ENCODE measurements at regions of chrX and their contacts with region 1.

Region 1: GRCh38 chrX:104136241-104137019 is 20.4 kb downstream of the SLC25A53 start:
- DNase-seq: peak; percentile 64 to 72
- H3K4me3 ChIP-seq: peak overlapping the region; percentile 30; the same call in 1 of the 2 replicates
- H3K4me3 Mint-ChIP-seq: peak overlapping the region; percentile 68
- H3K27ac Mint-ChIP-seq: no peak overlapping the region
- H3K4me1 ChIP-seq: no peaks in the 10 kb centered on the region
- H3K4me1 Mint-ChIP-seq: no peaks in the 10 kb centered on the region
- H3K27me3 ChIP-seq: no peaks in the 10 kb centered on the region
- H3K27me3 Mint-ChIP-seq: no peaks in the 10 kb centered on the region
- CTCF ChIP-seq: peak; percentile 44 to 56

Region 2: GRCh38 chrX:104113222-104113965 is 23.0 kb before region 1 on chrX:
- CTCF ChIA-PET with region 1: no interaction called
- POLR2A ChIA-PET with region 1: no interaction called
- intact Hi-C with region 1: loop called (anchors 1 kb)
- DNase-seq: peak; percentile 58 to 67
- H3K4me3 ChIP-seq: peak overlapping the region; percentile 64
- H3K4me3 Mint-ChIP-seq: peak overlapping the region; percentile 89
- H3K27ac Mint-ChIP-seq: no peak overlapping the region
- H3K4me1 ChIP-seq: no peaks in the 10 kb centered on the region
- H3K4me1 Mint-ChIP-seq: no peaks in the 10 kb centered on the region
- H3K27me3 ChIP-seq: no peaks in the 10 kb centered on the region
- H3K27me3 Mint-ChIP-seq: no peaks in the 10 kb centered on the region
- CTCF ChIP-seq: peak; percentile 26 to 65

Region 3: GRCh38 chrX:105375816-105376215 is 1239.4 kb after region 1 on chrX:
- CTCF ChIA-PET with region 1: no interaction called
- POLR2A ChIA-PET with region 1: no interaction called
- intact Hi-C with region 1: no loop called
- DNase-seq: no peak
- H3K4me3 ChIP-seq: no peak overlapping the region
- H3K4me3 Mint-ChIP-seq: no peak overlapping the region
- H3K27ac Mint-ChIP-seq: no peak overlapping the region
- H3K4me1 ChIP-seq: no peaks in the 10 kb centered on the region
- H3K4me1 Mint-ChIP-seq: no peaks in the 10 kb centered on the region
- H3K27me3 ChIP-seq: no peaks in the 10 kb centered on the region
- H3K27me3 Mint-ChIP-seq: no peaks in the 10 kb centered on the region
- CTCF ChIP-seq: no peak